ENCODE measurements at regions of chr13 and their contacts with region 1.

Region 1: GRCh38 chr13:49240017-49240416 is 7.7 kb upstream of the CDADC1 start:
- DNase-seq: peak; percentile 39
- H3K4me3 ChIP-seq: no peak overlapping the region
- H3K27ac ChIP-seq: no peak overlapping the region
- H3K4me1 ChIP-seq: no peaks in the 10 kb centered on the region
- H3K27me3 ChIP-seq: no peaks in the 10 kb centered on the region
- CTCF ChIP-seq: peak; percentile 57 to 70

Region 2: GRCh38 chr13:49278211-49278610 is 38.2 kb after region 1 on chr13:
- CTCF ChIA-PET with region 1: no interaction called
- dilution Hi-C with region 1: no loop called
- in situ Hi-C with region 1: no loop called
- intact Hi-C with region 1: loop called (anchors 1 kb)
- DNase-seq: no peak
- H3K4me3 ChIP-seq: no peak overlapping the region
- H3K27ac ChIP-seq: no peak overlapping the region
- H3K4me1 ChIP-seq: no peaks in the 10 kb centered on the region
- H3K27me3 ChIP-seq: no peaks in the 10 kb centered on the region
- CTCF ChIP-seq: no peak

Region 3: GRCh38 chr13:49436890-49437289 is 196.9 kb after region 1 on chr13:
- CTCF ChIA-PET with region 1: no interaction called
- dilution Hi-C with region 1: no loop called
- in situ Hi-C with region 1: no loop called
- intact Hi-C with region 1: loop called (anchors 2 kb)
- DNase-seq: peak; percentile 29
- H3K4me3 ChIP-seq: no peak overlapping the region
- H3K27ac ChIP-seq: no peak overlapping the region
- H3K4me1 ChIP-seq: no peaks in the 10 kb centered on the region
- H3K27me3 ChIP-seq: no peaks in the 10 kb centered on the region
- CTCF ChIP-seq: no peak

Region 4: GRCh38 chr13:49454388-49455006 is 214.5 kb after region 1 on chr13:
- CTCF ChIA-PET with region 1: no interaction called
- dilution Hi-C with region 1: no loop called
- in situ Hi-C with region 1: no loop called
- intact Hi-C with region 1: no loop called
- DNase-seq: no peak
- H3K4me3 ChIP-seq: no peak overlapping the region
- H3K27ac ChIP-seq: no peak overlapping the region
- H3K4me1 ChIP-seq: no peaks in the 10 kb centered on the region
- H3K27me3 ChIP-seq: no peaks in the 10 kb centered on the region
- CTCF ChIP-seq: no peak

Region 5: GRCh38 chr13:49530457-49530856 is 290.4 kb after region 1 on chr13:
- CTCF ChIA-PET with region 1: no interaction called
- dilution Hi-C with region 1: no loop called
- in situ Hi-C with region 1: no loop called
- intact Hi-C with region 1: no loop called
- DNase-seq: no peak
- H3K4me3 ChIP-seq: no peak overlapping the region
- H3K27ac ChIP-seq: no peak overlapping the region
- H3K4me1 ChIP-seq: no peaks in the 10 kb centered on the region
- H3K27me3 ChIP-seq: no peaks in the 10 kb centered on the region
- CTCF ChIP-seq: no peak

Measured in mammary epithelial cell (primary cell).